ENCODE measurements at regions of chr9 and their contacts with region 1.

Region 1: DNA sequence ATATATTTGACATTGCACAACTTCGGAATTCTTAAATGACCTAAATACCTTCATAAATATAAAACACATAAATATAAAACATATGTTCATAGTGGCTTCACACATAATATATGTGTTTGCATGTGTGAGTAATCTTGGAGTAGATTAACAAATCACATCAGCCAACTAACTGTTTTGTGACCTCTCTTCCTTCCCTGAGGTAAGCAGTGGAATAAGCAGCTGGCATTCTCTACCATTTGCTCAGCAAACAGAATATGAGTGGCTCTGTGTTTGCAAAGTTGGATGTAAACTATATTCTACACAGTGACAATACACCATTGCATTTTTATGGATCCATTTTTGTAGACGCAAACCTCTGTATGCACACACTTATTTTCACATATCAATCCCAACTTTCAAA is 189.9 kb downstream of the ACER2 start:
- H3K4me3 Mint-ChIP-seq: no peak overlapping the region
- H3K27ac Mint-ChIP-seq: no peak overlapping the region
- H3K4me1 Mint-ChIP-seq: no peaks in the 10 kb centered on the region
- H3K27me3 Mint-ChIP-seq: peaks cover 2% of the 10 kb centered on the region

Region 2: GRCh38 chr9:19481971-19482404 is 116.7 kb before region 1 on chr9:
- intact Hi-C with region 1: no loop called
- H3K4me3 Mint-ChIP-seq: no peak overlapping the region
- H3K27ac Mint-ChIP-seq: no peak overlapping the region
- H3K4me1 Mint-ChIP-seq: no peaks in the 10 kb centered on the region
- H3K27me3 Mint-ChIP-seq: peaks cover 2% of the 10 kb centered on the region

Region 3: GRCh38 chr9:19568946-19569345 is 29.8 kb before region 1 on chr9:
- intact Hi-C with region 1: no loop called
- H3K4me3 Mint-ChIP-seq: no peak overlapping the region
- H3K27ac Mint-ChIP-seq: no peak overlapping the region
- H3K4me1 Mint-ChIP-seq: no peaks in the 10 kb centered on the region
- H3K27me3 Mint-ChIP-seq: no peaks in the 10 kb centered on the region

Region 4: DNA sequence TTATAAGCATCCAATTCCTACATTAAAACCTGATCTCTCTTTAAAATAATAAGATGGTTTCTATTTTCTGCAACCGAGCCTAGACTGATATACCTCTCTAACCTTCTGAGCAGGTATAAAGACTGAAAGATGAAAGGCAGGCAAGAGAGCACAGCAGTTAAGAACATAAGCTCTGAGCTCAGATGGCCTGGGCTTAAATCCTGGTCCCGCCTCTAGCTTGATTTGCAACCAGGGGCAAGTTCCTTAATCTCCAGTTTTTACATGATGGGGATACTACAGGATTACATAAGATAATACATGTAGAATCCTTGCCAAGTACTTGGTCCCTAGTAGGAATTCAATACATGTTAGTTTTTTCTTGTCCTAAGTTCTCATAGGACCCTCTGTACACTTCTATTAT is 156.2 kb after region 1 on chr9:
- intact Hi-C with region 1: loop called (anchors 10 kb)
- H3K4me3 Mint-ChIP-seq: no peak overlapping the region
- H3K27ac Mint-ChIP-seq: no peak overlapping the region
- H3K4me1 Mint-ChIP-seq: no peaks in the 10 kb centered on the region
- H3K27me3 Mint-ChIP-seq: no peaks in the 10 kb centered on the region

Region 5: GRCh38 chr9:20043035-20043434 is 444.3 kb after region 1 on chr9:
- intact Hi-C with region 1: no loop called
- H3K4me3 Mint-ChIP-seq: no peak overlapping the region
- H3K27ac Mint-ChIP-seq: no peak overlapping the region
- H3K4me1 Mint-ChIP-seq: no peaks in the 10 kb centered on the region
- H3K27me3 Mint-ChIP-seq: no peaks in the 10 kb centered on the region